Activated T-helper 1 cell treated with anti-CD3 and anti-CD28 coated beads, Interleukin-12 subunit alpha, Interleukin-12 subunit beta, Interleukin-2, Interleukin-4 antibody, amounts not matched to agents 30 ng/mL and 10 ng/mL and 1 ng/mL, durations not matched to agents 14 hours and 24 hours and 36 hours (primary cell): ENCODE measurements at regions of chr9 and their contacts with region 1.

Region 1: GRCh38 chr9:96418074-96418809 is at the start of gene ZNF367:
- DNase-seq: peak; percentile 93
- H3K4me3 Mint-ChIP-seq: peak within 1 kb of the TSS; percentile 94
- H3K27ac Mint-ChIP-seq: peak within 1 kb of the TSS; percentile 95
- H3K4me1 Mint-ChIP-seq: peaks cover 43% of the 10 kb centered on the region
- H3K27me3 Mint-ChIP-seq: no peaks in the 10 kb centered on the region
- total RNA-seq, gene ZNF367: 21.8 and 22.0 TPM in 2 replicates

Region 2: GRCh38 chr9:95317119-95317892 is 1100.9 kb before region 1 on chr9 and contains the start of gene FANCC:
- intact Hi-C with region 1: loop called (anchors 5 kb)
- DNase-seq: peak; percentile 84
- H3K4me3 Mint-ChIP-seq: peak within 1 kb of the TSS; percentile 91
- H3K27ac Mint-ChIP-seq: peak within 1 kb of the TSS; percentile 95
- H3K4me1 Mint-ChIP-seq: peaks cover 25% of the 10 kb centered on the region
- H3K27me3 Mint-ChIP-seq: peaks cover 12% of the 10 kb centered on the region
- total RNA-seq, gene FANCC: 18.7 and 23.7 TPM in 2 replicates

Region 3: GRCh38 chr9:96327694-96328352 is 90.4 kb before region 1 on chr9:
- intact Hi-C with region 1: loop called (anchors 5 kb)
- DNase-seq: peak; percentile 6
- H3K4me3 Mint-ChIP-seq: no peak overlapping the region
- H3K27ac Mint-ChIP-seq: no peak overlapping the region
- H3K4me1 Mint-ChIP-seq: no peaks in the 10 kb centered on the region
- H3K27me3 Mint-ChIP-seq: peaks cover 5% of the 10 kb centered on the region

Region 4: DNA sequence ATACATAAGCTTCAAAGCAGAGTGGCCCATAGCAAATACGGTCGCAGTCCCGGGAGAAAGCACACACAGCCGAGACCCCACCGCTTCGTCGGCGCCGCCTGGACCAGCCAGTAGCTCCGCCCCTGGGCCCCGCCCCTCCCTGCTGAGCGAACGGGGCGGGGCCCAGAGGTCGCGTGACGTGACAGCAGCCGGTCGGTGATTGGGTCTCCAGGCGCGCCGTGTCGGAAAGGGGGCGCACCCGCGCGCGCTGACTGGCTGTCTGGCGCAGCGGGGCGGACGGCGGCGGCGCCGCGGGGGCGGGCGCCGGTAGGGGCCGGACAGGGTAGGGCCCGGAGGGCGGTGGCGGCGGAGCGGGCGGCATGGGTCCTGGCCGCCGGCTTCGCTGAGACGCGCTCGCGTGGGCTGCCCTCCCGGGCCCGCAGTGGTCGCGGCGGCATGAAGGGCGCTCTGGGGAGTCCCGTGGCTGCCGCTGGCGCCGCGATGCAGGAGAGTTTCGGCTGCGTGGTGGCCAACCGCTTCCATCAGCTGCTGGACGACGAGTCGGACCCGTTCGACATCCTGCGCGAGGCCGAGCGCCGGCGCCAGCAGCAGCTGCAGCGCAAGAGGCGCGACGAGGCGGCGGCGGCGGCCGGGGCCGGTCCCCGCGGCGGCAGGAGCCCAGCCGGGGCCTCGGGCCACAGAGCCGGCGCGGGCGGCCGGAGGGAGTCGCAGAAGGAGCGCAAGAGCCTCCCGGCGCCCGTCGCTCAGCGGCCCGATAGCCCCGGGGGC is 31.8 kb after region 1 on chr9 and contains the start of gene HABP4:
- intact Hi-C with region 1: loop called (anchors 1 kb)
- DNase-seq: peak; percentile 94
- H3K4me3 Mint-ChIP-seq: peak within 1 kb of the TSS; percentile 87
- H3K27ac Mint-ChIP-seq: peak within 1 kb of the TSS; percentile 55
- H3K4me1 Mint-ChIP-seq: peaks cover 23% of the 10 kb centered on the region
- H3K27me3 Mint-ChIP-seq: peaks cover 29% of the 10 kb centered on the region
- total RNA-seq, gene HABP4: 10.8 and 11.1 TPM in 2 replicates

Region 5: DNA sequence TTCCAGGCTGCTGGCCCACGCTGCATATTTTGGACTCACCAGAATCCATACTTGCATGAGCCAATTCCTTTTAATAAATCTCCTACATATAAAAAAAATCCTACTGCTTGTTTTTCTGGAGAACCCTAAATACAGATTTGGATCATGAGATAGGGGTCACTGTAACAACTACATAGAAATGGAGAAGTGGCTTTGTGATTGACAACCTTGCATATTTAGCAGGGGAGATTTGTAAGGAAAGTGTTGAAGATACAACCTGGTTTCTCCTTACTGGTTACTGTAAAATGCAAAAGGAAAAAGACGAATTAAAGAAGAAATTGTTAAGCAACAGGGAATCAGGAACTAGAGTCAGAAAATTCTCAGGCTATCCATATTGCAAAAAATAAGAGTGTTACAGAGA is 106.5 kb after region 1 on chr9:
- intact Hi-C with region 1: no loop called
- DNase-seq: no peak
- H3K4me3 Mint-ChIP-seq: no peak overlapping the region
- H3K27ac Mint-ChIP-seq: no peak overlapping the region
- H3K4me1 Mint-ChIP-seq: peaks cover 9% of the 10 kb centered on the region
- H3K27me3 Mint-ChIP-seq: peaks cover 2% of the 10 kb centered on the region

Region 6: DNA sequence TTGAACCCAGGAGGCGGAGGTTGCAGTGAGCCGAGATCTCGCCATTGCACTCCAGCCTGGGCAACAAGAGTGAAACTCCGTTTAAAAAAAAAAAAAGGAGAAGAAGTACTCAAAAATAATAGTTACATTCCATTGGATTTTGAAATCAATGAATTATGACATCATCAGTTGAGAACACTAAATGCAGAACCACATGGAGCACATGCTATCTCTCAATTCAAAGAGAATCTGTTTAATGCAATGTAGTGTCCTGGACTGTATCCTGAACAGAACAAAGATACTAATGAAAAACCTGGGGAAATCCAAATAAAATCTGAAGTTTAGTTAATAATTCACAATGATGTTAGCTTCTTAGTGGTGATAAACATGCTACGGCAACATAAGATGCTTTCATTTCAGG is 181.1 kb after region 1 on chr9:
- intact Hi-C with region 1: no loop called
- DNase-seq: no peak
- H3K4me3 Mint-ChIP-seq: no peak overlapping the region
- H3K27ac Mint-ChIP-seq: no peak overlapping the region
- H3K4me1 Mint-ChIP-seq: no peaks in the 10 kb centered on the region
- H3K27me3 Mint-ChIP-seq: peaks cover 7% of the 10 kb centered on the region

Region 7: DNA sequence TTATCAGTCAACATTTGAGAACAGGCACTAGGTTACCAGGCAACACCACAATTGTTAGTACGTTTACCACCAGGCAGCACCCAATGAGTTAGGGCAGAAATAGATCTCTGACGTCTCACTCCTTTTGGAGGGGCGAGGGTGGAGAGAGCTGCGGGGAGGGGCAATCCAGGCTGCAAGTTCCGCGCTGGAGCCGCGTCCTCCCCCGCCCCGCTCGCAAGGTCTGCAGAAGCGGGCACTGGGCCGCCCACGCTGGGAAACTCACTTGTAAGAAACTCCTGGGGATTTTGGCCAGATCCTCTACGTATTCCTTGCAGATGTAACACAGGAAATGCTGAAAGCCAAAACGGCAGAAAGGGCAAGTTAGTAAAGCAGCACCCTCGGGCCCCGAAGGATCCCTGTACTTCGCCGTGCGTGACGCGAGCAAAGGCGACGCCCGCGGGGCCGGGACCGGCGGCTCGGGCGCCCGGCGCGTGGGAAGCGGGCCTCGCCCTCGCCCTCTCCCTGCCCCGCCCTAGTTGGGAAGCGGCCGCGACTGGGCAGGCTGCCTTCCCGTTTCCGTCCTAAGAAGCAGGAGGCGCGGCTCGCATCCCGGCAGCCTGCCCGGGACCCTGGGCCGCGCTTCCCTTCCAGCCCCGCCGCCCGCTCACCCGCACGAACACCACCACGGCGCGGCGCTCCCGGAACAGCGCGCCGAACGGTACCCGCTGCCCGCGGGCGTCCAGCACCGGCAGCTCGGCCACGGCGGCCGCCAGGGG is 236.4 kb after region 1 on chr9:
- intact Hi-C with region 1: loop called (anchors 1 kb)
- DNase-seq: peak; percentile 50
- H3K4me3 Mint-ChIP-seq: peak overlapping the region; percentile 88
- H3K27ac Mint-ChIP-seq: peak overlapping the region; percentile 72
- H3K4me1 Mint-ChIP-seq: peaks cover 11% of the 10 kb centered on the region
- H3K27me3 Mint-ChIP-seq: peaks cover 6% of the 10 kb centered on the region

Region 8: GRCh38 chr9:97632985-97633858 is 1215.0 kb after region 1 on chr9 and contains the starts of genes NCBP1 and TSTD2:
- intact Hi-C with region 1: loop called (anchors 2 kb)
- DNase-seq: peak; percentile 95
- H3K4me3 Mint-ChIP-seq: peak within 1 kb of the TSS; percentile 94
- H3K27ac Mint-ChIP-seq: peak within 1 kb of the TSS; percentile 99
- H3K4me1 Mint-ChIP-seq: peaks cover 48% of the 10 kb centered on the region
- H3K27me3 Mint-ChIP-seq: no peaks in the 10 kb centered on the region
- total RNA-seq, gene NCBP1: 43.2 and 50.5 TPM in 2 replicates
- total RNA-seq, gene TSTD2: 16.4 and 19.2 TPM in 2 replicates